ENCODE measurements at regions of chr17 and their contacts with region 1.

Region 1: GRCh38 chr17:80866147-80866793 is 125.4 kb upstream of the CHMP6 start:
- DNase-seq: peak; percentile 52
- H3K4me3 ChIP-seq: no peak overlapping the region
- H3K27ac ChIP-seq: no peak overlapping the region
- H3K4me1 ChIP-seq: peaks cover 18% of the 10 kb centered on the region
- H3K27me3 ChIP-seq: no peaks in the 10 kb centered on the region
- CTCF ChIP-seq: peak; percentile 78 to 82

Region 2: GRCh38 chr17:80426681-80427326 is 439.5 kb before region 1 on chr17:
- CTCF ChIA-PET with region 1: no interaction called
- dilution Hi-C with region 1: no loop called
- in situ Hi-C with region 1: no loop called
- intact Hi-C with region 1: loop called (anchors 2 kb)
- DNase-seq: peak; percentile 46
- H3K4me3 ChIP-seq: no peak overlapping the region
- H3K27ac ChIP-seq: no peak overlapping the region
- H3K4me1 ChIP-seq: no peaks in the 10 kb centered on the region
- H3K27me3 ChIP-seq: no peaks in the 10 kb centered on the region
- CTCF ChIP-seq: peak; percentile 86 to 98

Region 3: DNA sequence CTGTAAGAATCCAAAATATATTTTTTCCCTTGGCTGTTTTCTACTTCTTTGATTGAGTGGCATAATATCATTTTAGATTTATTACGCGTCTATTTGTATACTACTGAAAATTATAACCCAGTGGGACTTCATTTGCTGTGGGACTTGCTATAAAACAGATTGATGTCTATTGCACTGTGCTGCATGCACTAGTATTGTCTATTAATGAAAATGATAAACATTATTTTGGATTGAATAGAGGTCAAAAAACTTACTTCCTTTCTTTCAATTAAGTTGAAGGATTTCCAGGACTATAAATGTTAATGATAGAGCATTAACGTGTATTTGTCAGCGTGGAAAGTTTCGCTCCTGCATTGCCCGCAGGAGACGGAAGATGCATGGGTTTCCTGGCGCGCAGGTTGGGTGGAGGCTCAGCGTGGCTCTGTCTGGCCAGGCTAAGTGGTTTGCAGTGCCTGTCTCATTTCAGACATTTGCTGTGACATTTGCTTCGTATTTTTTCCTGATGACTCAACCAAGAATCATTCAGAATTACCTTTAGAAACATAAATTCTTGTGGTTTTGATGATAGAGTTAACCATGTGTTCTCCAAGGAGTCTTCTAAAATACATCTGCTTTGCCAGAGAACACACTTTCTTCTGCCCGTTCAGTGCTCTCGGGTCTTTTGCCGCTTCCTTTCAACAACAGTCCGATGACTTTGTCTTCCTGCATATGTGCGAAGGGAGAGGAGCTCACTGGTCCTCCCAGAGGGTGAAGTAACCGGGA is 105.0 kb before region 1 on chr17:
- CTCF ChIA-PET with region 1: no interaction called
- dilution Hi-C with region 1: loop called (anchors 5 kb)
- in situ Hi-C with region 1: no loop called
- intact Hi-C with region 1: no loop called
- DNase-seq: peak; percentile 75
- H3K4me3 ChIP-seq: no peak overlapping the region
- H3K27ac ChIP-seq: peak overlapping the region; percentile 2
- H3K4me1 ChIP-seq: peaks cover 17% of the 10 kb centered on the region
- H3K27me3 ChIP-seq: no peaks in the 10 kb centered on the region
- CTCF ChIP-seq: no peak

Region 4: DNA sequence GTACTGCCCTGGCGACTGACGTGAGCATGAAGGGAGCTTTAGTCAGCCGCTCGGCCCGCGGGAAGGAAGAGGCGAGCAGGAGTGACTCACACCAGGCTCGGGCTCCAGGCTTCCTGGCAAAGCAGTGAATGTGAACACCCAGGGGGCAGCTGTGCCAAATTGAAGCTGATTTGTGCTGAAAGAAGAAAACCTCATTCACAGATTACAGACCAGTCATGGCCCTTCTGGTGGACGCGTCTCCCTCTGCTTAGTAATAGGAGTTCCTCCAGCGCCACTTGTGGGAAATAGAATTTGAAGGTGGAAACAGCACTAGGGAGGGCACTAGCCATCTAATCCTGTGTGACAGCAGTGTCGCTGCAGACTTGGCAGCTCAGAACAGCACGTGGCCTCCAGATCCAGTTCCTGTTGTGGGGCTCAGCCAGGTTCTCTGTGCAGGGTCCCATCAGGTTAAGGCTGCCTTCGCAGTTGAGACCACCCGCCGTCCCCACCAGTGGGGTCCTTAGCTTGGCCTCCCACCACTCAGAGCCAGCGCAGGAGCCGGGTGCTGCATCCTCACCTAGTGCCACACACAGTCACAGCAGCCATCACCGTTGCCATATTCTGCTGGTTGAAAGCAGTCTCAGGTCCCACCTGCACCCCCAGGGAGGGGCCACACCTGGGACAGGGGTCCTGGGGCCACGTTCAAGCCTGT is 39.2 kb before region 1 on chr17:
- CTCF ChIA-PET with region 1: no interaction called
- dilution Hi-C with region 1: loop called (anchors 5 kb)
- in situ Hi-C with region 1: no loop called
- intact Hi-C with region 1: no loop called
- DNase-seq: peak; percentile 86
- H3K4me3 ChIP-seq: no peak overlapping the region
- H3K27ac ChIP-seq: peak overlapping the region; percentile 42
- H3K4me1 ChIP-seq: peaks cover 21% of the 10 kb centered on the region
- H3K27me3 ChIP-seq: no peaks in the 10 kb centered on the region
- CTCF ChIP-seq: no peak

Region 5: GRCh38 chr17:80889231-80890195 is 23.2 kb after region 1 on chr17:
- CTCF ChIA-PET with region 1: no interaction called
- dilution Hi-C with region 1: no loop called
- in situ Hi-C with region 1: no loop called
- intact Hi-C with region 1: no loop called
- DNase-seq: no peak
- H3K4me3 ChIP-seq: no peak overlapping the region
- H3K27ac ChIP-seq: no peak overlapping the region
- H3K4me1 ChIP-seq: peaks cover 36% of the 10 kb centered on the region
- H3K27me3 ChIP-seq: no peaks in the 10 kb centered on the region
- CTCF ChIP-seq: no peak

Region 6: GRCh38 chr17:80899402-80900268 is 33.4 kb after region 1 on chr17:
- CTCF ChIA-PET with region 1: no interaction called
- dilution Hi-C with region 1: loop called (anchors 5 kb)
- in situ Hi-C with region 1: no loop called
- intact Hi-C with region 1: no loop called
- DNase-seq: peak; percentile 12
- H3K4me3 ChIP-seq: no peak overlapping the region
- H3K27ac ChIP-seq: no peak overlapping the region
- H3K4me1 ChIP-seq: peaks cover 27% of the 10 kb centered on the region
- H3K27me3 ChIP-seq: no peaks in the 10 kb centered on the region
- CTCF ChIP-seq: peak; percentile 41 to 53

Region 7: DNA sequence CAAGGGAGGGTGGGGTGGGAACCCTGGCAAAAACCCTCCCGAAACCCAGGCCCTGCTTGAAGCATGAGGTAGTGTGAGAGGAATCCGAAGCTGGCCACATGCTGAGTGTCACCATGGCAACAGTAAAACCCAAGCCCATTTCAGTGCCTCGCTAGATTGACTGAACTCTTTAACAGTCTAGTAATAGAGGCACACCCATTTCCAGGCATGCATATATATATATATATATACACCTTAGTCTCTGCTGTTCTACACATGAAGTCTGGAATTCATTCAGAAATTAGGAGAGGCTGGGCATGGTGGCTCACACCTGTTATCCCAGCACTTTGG is 65.6 kb after region 1 on chr17:
- CTCF ChIA-PET with region 1: no interaction called
- dilution Hi-C with region 1: loop called (anchors 5 kb)
- in situ Hi-C with region 1: no loop called
- intact Hi-C with region 1: no loop called
- DNase-seq: peak; percentile 25
- H3K4me3 ChIP-seq: no peak overlapping the region
- H3K27ac ChIP-seq: no peak overlapping the region
- H3K4me1 ChIP-seq: no peaks in the 10 kb centered on the region
- H3K27me3 ChIP-seq: peaks cover 1% of the 10 kb centered on the region
- CTCF ChIP-seq: no peak

Region 8: DNA sequence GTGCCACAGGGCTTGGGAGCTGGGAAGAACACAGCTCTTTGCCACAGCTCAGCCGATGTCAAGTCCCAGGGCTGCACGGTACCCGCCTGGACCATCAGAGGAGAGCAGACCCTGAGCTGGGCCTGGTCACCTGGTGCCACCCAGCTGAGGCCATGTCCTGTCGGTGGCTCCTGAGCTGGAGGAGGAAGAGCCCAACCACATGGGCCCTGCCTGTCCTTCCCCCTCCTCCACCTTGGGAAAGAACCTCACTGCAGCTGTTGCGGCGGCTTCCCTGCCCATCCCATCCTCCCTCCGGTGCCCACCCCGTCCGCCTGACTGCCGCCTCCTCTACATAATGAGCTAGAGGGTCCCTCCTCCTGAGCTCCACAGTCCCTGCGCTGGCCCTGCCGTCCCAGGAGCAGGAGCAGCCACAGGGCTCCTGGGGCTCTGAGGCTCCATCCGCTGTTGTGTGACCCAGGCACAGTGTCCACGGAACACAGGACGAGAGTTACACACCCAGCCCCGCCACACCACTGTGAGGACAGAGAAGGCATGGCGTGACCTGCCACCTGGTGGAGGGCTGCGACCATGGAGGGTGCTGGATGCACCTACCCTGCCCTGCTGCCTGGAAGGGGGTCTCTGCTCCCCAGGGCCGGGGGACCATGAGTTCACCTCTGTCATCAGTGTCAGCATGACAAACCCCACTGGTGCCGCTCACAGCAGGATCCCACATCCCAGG is 103.9 kb after region 1 on chr17:
- CTCF ChIA-PET with region 1: no interaction called
- dilution Hi-C with region 1: no loop called
- in situ Hi-C with region 1: no loop called
- intact Hi-C with region 1: loop called (anchors 1 kb)
- DNase-seq: no peak
- H3K4me3 ChIP-seq: no peak overlapping the region
- H3K27ac ChIP-seq: no peak overlapping the region
- H3K4me1 ChIP-seq: no peaks in the 10 kb centered on the region
- H3K27me3 ChIP-seq: no peaks in the 10 kb centered on the region
- CTCF ChIP-seq: peak; percentile 32 to 62